ENCODE measurements at regions of chr19 and their contacts with region 1.

Region 1: GRCh38 chr19:42628411-42629140 is 33.9 kb upstream of the CEACAM8 start:
- DNase-seq: no peak
- ATAC-seq: no peak

Region 2: GRCh38 chr19:42693764-42694350 is 65.3 kb after region 1 on chr19:
- intact Hi-C with region 1: no loop called
- DNase-seq: no peak
- ATAC-seq: no peak

Region 3: GRCh38 chr19:43420954-43421353 is 792.4 kb after region 1 on chr19:
- intact Hi-C with region 1: loop called (anchors 5 kb)
- DNase-seq: no peak
- ATAC-seq: no peak